Activated CD4-positive, alpha-beta T cell treated with anti-CD3 and anti-CD28 coated beads for 36 hours (primary cell): ENCODE measurements at regions of chr12 and their contacts with region 1.

Region 1: DNA sequence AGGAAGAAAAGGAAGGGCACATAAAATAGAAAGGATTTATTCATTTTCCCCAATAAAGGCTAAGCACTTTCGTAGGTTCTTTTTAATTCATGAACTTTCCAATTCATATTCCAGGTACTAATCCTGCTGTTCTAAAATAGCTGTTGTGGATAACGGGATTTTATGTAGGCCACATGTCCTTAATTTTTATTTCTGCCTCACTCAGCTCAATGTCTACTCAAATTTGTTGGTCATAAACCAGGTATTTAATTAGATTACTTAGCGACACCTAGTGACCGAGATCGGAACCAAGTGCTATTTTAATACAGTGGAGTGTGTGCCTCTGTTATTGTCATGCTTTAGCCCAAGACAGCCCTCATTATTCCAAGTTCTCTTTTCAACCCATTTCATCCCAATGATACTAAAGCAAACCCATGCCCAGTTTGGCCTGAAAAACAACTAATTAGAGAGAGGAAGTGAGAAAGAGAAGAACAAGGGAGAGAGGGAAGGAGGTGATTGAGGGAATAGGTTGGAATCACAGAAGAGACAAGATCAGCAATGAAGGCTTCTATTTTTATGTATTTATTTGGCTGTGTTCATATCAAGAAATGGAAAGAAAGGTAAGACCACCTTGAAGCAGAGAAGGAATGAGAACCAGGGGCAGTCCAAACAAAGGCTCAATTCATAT is 45.9 kb upstream of the IFNG-AS1 start:
- DNase-seq: peak; percentile 75
- ATAC-seq: peak; percentile 70
- H3K4me3 Mint-ChIP-seq: no peak overlapping the region
- H3K27ac Mint-ChIP-seq: no peak overlapping the region
- H3K4me1 Mint-ChIP-seq: peaks cover 4% of the 10 kb centered on the region
- H3K27me3 Mint-ChIP-seq: peaks cover 2% of the 10 kb centered on the region

Region 2: DNA sequence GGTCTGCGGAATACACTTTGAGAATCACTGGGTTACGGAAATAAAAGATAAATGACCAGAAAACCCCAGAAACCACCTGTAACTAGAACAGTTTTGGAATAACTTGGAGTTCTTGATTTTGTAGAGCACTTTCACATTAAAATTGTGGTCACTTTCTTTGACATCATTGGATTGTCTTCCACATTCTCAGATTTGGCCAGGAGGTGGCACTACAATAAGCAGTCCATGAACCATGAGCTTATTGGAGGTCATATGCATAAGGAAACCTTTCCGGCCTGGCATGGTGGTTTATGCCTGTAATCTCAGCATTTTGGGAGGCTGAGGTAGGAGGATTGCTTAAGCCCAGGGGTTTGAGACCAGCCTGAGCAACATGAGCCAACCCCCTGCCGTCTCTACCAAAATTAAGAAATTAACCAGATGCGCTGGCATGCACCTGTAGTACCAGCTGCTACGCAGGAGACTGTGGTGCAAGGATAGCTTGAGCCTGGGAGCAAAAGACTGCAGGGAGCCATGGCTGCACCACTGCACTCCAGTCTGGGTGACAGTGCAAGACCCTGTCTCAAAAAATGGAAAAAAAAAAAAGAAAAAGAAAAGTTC is 781.9 kb before region 1 on chr12:
- CTCF ChIA-PET with region 1: interaction called, 3 read pairs
- POLR2A ChIA-PET with region 1: no interaction called
- intact Hi-C with region 1: loop called in 1 of 2 experiments (anchors 10 kb)
- DNase-seq: peak; percentile 64
- ATAC-seq: no peak
- H3K4me3 Mint-ChIP-seq: no peak overlapping the region
- H3K27ac Mint-ChIP-seq: no peak overlapping the region
- H3K4me1 Mint-ChIP-seq: no peaks in the 10 kb centered on the region
- H3K27me3 Mint-ChIP-seq: peaks cover 2% of the 10 kb centered on the region

Region 3: GRCh38 chr12:67355578-67356379 is 587.6 kb before region 1 on chr12:
- CTCF ChIA-PET with region 1: interaction called, 39 read pairs
- POLR2A ChIA-PET with region 1: no interaction called
- intact Hi-C with region 1: loop called (anchors 1 kb)
- DNase-seq: peak; percentile 22
- ATAC-seq: peak; percentile 65
- H3K4me3 Mint-ChIP-seq: no peak overlapping the region
- H3K27ac Mint-ChIP-seq: no peak overlapping the region
- H3K4me1 Mint-ChIP-seq: peaks cover 29% of the 10 kb centered on the region
- H3K27me3 Mint-ChIP-seq: no peaks in the 10 kb centered on the region

Region 4: GRCh38 chr12:68428724-68429501 is 485.6 kb after region 1 on chr12:
- CTCF ChIA-PET with region 1: no interaction called
- POLR2A ChIA-PET with region 1: no interaction called
- intact Hi-C with region 1: no loop called
- DNase-seq: no peak
- ATAC-seq: no peak
- H3K4me3 Mint-ChIP-seq: no peak overlapping the region
- H3K27ac Mint-ChIP-seq: no peak overlapping the region
- H3K4me1 Mint-ChIP-seq: no peaks in the 10 kb centered on the region
- H3K27me3 Mint-ChIP-seq: no peaks in the 10 kb centered on the region